ENCODE measurements at regions of chr4 and their contacts with region 1.

Region 1: DNA sequence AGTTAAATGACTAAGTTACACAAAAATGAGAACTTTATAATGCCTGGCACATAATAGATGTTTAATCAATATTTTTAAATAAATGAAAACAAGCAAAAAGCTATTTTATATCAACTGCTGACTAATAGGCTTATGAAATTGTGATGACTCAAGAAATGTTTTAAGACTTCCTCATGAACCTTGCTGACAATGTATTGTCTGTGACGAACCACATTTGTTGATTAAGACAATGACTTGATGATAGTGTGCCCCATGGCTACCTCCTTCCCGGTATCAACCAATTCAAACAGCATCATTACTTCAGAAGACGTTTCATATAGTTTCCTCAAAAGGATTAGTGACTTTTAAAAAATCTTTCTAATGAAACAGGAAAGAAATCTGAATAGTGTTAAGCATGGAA is 7.9 kb downstream of the CXCL6 start:
- DNase-seq: no peak
- H3K4me3 ChIP-seq: no peak overlapping the region
- H3K27me3 ChIP-seq: peaks cover 5% of the 10 kb centered on the region
- CTCF ChIP-seq: no peak

Region 2: DNA sequence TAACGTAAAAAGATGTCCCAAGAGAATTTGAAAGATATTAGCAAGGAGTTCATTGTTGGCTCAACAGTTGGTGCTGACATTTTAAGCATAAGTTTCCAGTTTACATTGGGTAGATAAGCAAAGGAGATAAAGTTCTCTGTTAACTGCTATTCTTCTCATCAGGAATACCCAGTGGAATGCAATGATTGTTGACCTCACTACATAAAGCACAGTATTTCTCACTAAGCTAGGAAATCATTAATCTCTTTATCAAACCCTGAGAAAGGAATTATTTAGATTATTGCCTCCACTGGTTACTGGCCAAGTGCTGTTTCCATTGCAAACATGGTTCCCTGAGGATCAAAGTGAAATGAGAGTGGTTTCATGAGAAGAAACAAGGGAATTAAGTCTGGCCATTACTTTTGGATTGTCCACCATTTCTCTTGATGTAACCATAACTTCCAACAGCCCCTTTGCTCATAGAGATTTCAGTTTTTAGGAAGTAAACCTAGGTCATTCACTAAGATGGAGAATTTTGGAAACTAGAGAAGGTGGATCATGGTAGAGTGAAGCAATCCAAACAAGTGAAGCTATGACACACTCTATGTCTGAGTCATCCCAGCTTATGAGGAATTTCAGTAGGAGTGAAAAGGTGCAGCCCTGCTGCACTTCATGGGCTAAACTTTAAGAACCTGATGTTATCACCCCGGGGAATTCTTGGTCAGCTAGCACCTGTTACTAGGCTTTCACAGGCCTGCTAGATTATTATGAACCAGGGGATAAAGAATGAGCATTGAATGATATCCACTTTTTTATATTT is 764.0 kb after region 1 on chr4:
- CTCF ChIA-PET with region 1: no interaction called
- POLR2A ChIA-PET with region 1: interaction called, 13 read pairs
- DNase-seq: no peak
- H3K4me3 ChIP-seq: no peak overlapping the region
- H3K27me3 ChIP-seq: 0 out of 2 replicates have a peak, but pooled peaks cover 3% of the 10 kb centered on the region
- CTCF ChIP-seq: no peak